CD8-positive, alpha-beta memory T cell (primary cell): ENCODE measurements at regions of chr13 and their contacts with region 1.

Region 1: DNA sequence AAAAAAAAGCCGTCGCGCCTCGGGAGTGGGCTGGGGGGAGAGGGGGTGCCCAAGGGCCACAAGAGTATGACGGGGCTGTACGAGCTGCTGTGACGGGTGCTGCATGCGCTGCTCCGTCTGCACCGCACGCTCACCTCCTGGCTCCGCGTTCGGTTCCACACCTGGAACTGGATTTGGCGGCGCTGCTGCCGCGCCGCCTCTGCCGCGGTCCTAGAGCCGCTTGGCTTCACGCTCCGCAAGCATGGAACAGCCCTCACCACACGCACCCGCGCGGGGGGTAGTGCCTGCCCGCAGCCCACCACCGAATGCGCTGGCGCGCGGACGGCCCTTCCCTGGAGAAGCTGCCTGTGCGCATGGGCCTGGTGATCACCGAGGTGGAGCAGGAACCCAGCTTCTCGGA is 18.8 kb downstream of the C1QTNF9 start:
- DNase-seq: peak in 1 of 5 donors; percentile 1
- H3K4me3 ChIP-seq: no peak overlapping the region
- H3K4me3 Mint-ChIP-seq: peak overlapping the region in 2 of 7 donors; percentile 33 to 39
- H3K27ac ChIP-seq: no peak overlapping the region
- H3K27ac Mint-ChIP-seq: no peak overlapping the region
- H3K4me1 ChIP-seq: no peaks in the 10 kb centered on the region
- H3K4me1 Mint-ChIP-seq: no peaks in the 10 kb centered on the region
- H3K27me3 ChIP-seq: no peaks in the 10 kb centered on the region
- H3K27me3 Mint-ChIP-seq: peaks cover 23 to 53% of the 10 kb centered on the region in 2 donors

Region 2: GRCh38 chr13:26221721-26222519 is 1893.8 kb after region 1 on chr13 and contains the start of gene RNF6:
- CTCF ChIA-PET with region 1: no interaction called
- POLR2A ChIA-PET with region 1: interaction called, 12 read pairs
- DNase-seq: peak; percentile 79 to 93 (median 89)
- H3K4me3 ChIP-seq: peak within 1 kb of the TSS; percentile 93
- H3K4me3 Mint-ChIP-seq: peak within 1 kb of the TSS; percentile 93 to 99 (median 95)
- H3K27ac ChIP-seq: peak within 1 kb of the TSS; percentile 95
- H3K27ac Mint-ChIP-seq: peak within 1 kb of the TSS; percentile 83 to 100 (median 99)
- H3K4me1 ChIP-seq: peaks cover 30% of the 10 kb centered on the region
- H3K4me1 Mint-ChIP-seq: peaks cover 40 to 52% (median 51%) of the 10 kb centered on the region in 3 donors
- H3K27me3 ChIP-seq: no peaks in the 10 kb centered on the region
- H3K27me3 Mint-ChIP-seq: peaks cover 0 to 14% of the 10 kb centered on the region in 2 donors
- total RNA-seq, gene RNF6: 64.6 to 65.0 TPM